ENCODE measurements at regions of chr4 and their contacts with region 1.

Region 1: GRCh38 chr4:78517050-78517652 is 34.4 kb upstream of the ANXA3 start:
- DNase-seq: no peak
- ATAC-seq: no peak
- H3K4me3 Mint-ChIP-seq: no peak overlapping the region
- H3K27ac Mint-ChIP-seq: no peak overlapping the region
- H3K4me1 Mint-ChIP-seq: no peaks in the 10 kb centered on the region
- H3K27me3 Mint-ChIP-seq: no peaks in the 10 kb centered on the region
- CTCF ChIP-seq: peak; percentile 65

Region 2: DNA sequence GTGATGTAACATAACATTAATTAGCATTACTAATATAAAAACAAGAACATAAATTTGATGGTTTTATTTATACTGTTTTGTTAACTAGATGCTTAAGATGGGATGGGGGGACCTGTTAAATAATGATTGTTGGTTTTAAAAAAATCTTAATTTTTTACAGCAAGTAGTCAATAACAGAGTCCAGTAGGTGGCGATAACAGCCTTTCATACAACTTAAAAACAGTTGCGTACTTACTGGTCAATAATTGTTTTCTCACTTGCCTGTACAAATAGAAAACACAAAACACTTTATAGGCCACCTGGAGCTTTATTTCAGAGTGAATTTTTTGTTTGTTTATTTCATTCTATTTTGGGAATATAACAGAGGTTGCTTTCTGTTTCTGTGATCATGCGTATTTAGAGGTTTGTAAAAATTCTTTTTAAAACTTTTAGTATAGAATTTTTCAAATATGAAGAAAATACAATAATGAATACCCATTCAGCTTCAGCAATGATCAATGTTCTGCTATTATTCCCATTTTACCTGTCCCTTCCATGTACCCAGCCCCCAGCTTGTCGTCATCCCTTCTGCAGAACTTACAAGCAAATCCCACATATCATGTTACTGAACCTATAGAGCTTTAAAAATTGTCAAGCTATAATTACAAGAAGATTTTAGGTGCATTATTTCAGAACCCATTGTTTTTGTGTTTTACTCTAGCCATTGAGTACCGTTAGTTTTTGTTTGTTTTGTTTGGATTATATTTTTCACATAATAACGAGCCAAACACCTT is 557.4 kb before region 1 on chr4:
- CTCF ChIA-PET with region 1: no interaction called
- POLR2A ChIA-PET with region 1: no interaction called
- intact Hi-C with region 1: loop called (anchors 5 kb)
- DNase-seq: no peak
- ATAC-seq: peak; percentile 60
- H3K4me3 Mint-ChIP-seq: no peak overlapping the region
- H3K27ac Mint-ChIP-seq: no peak overlapping the region
- H3K4me1 Mint-ChIP-seq: peaks cover 10% of the 10 kb centered on the region
- H3K27me3 Mint-ChIP-seq: no peaks in the 10 kb centered on the region
- CTCF ChIP-seq: peak; percentile 80

Region 3: GRCh38 chr4:78776729-78777575 is 259.8 kb after region 1 on chr4:
- CTCF ChIA-PET with region 1: no interaction called
- POLR2A ChIA-PET with region 1: no interaction called
- intact Hi-C with region 1: no loop called
- DNase-seq: peak; percentile 78
- ATAC-seq: peak; percentile 69
- H3K4me3 Mint-ChIP-seq: peak overlapping the region; percentile 87
- H3K27ac Mint-ChIP-seq: peak overlapping the region; percentile 82
- H3K4me1 Mint-ChIP-seq: peaks cover 27% of the 10 kb centered on the region
- H3K27me3 Mint-ChIP-seq: no peaks in the 10 kb centered on the region
- CTCF ChIP-seq: no peak

Measured in activated CD8-positive, alpha-beta T cell treated with anti-CD3 and anti-CD28 coated beads for 36 hours (primary cell).